Activated T-helper 2 cell treated with anti-CD3 and anti-CD28 coated beads, Interferon-gamma antibody, Interleukin-2, Interleukin-4, amounts not matched to agents 10 μg/mL and 5 μg/mL and 100 μg/mL, durations not matched to agents 14 hours and 24 hours and 36 hours (primary cell): ENCODE measurements at regions of chr6 and their contacts with region 1.

Region 1: DNA sequence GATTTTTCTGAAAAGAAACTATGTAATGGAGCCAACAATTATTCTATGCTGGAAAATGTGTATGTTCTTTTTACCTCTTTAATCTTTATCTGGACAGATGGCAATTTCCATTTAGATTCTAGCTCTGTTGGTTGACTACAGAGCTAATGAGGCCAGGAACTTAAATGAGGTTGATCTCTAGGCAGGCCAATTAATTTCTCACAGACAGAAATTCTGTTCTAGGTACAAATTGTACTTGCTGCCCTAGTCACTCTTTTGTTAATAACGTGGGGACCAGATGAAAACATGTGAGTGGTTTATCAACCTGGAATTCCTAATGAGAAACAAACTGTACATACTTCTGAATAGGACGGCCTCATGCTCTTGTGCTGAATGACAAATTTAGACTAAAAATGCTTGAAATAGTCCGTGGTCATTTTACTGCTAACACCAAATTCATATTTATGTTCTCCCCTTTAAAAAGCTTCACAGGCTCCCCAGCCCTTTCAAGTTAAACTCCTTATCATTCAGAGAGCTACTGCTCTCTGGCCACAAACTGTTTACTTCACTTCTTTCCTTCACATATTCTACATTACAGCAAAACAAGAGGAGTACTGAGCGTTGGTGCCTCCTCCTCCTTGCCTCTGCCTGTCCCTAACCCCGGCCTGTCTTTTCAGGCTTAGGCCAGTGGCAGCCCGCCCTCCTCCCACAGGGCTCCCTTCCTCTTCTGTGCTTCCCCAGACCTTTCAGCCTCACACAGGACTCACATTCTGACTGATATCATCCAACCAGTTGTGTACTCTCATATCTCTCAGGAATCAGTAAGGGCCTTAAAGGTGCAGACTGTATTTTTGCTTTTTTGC is 41.4 kb downstream of the DTNBP1 start:
- DNase-seq: no peak
- H3K4me3 Mint-ChIP-seq: peak overlapping the region; percentile 14
- H3K27ac Mint-ChIP-seq: peak overlapping the region; percentile 69
- H3K4me1 Mint-ChIP-seq: peaks cover 47% of the 10 kb centered on the region
- H3K27me3 Mint-ChIP-seq: no peaks in the 10 kb centered on the region

Region 2: GRCh38 chr6:13916230-13916944 is 1705.0 kb before region 1 on chr6:
- intact Hi-C with region 1: loop called (anchors 10 kb)
- DNase-seq: no peak
- H3K4me3 Mint-ChIP-seq: no peak overlapping the region
- H3K27ac Mint-ChIP-seq: no peak overlapping the region
- H3K4me1 Mint-ChIP-seq: peaks cover 6% of the 10 kb centered on the region
- H3K27me3 Mint-ChIP-seq: peaks cover 67% of the 10 kb centered on the region

Region 3: DNA sequence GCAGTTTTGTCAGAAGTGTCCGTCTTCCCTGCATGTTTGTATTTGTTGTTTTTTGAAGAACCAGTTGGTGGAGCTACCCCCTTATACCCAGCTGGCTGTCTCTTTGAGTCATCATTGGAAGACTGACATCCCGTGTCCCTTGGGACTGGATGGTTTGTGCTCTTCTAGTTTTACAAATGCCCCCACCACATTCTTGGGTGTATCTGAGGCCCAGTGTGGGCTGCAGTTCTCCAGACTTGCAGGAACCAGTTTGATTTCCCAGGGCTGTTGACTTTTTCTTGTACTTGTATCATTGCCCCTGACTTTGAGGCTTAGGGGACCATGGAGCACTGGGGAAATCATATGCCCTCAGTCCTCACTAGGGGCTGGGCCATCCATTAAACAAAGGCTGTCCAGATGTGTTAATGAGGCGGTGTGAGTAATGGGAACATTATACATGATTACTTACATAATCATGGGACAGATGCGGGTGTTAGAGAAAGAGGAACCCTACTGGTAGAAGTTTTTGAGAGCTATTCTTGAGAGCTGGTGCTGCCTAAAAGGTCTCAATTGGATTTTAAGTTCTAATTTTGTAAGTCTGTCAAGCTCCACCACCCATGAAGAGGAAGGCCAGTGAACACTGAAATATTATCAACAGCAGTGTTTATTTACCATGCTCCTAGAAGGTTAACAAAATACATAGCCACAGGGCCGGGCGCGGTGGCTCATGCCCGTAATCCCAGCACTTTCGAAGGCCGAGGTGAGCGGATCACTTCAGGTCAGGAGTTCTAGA is 367.2 kb before region 1 on chr6:
- intact Hi-C with region 1: loop called (anchors 2 kb)
- DNase-seq: no peak
- H3K4me3 Mint-ChIP-seq: peak overlapping the region; percentile 65
- H3K27ac Mint-ChIP-seq: peak overlapping the region; percentile 83
- H3K4me1 Mint-ChIP-seq: peaks cover 88% of the 10 kb centered on the region
- H3K27me3 Mint-ChIP-seq: no peaks in the 10 kb centered on the region

Region 4: GRCh38 chr6:15420959-15421438 is 200.4 kb before region 1 on chr6:
- intact Hi-C with region 1: loop called (anchors 10 kb)
- DNase-seq: no peak
- H3K4me3 Mint-ChIP-seq: peak overlapping the region; percentile 53
- H3K27ac Mint-ChIP-seq: peak overlapping the region; percentile 89
- H3K4me1 Mint-ChIP-seq: peaks cover 68% of the 10 kb centered on the region
- H3K27me3 Mint-ChIP-seq: no peaks in the 10 kb centered on the region

Region 5: GRCh38 chr6:15522427-15522826 is 99.0 kb before region 1 on chr6:
- intact Hi-C with region 1: loop called (anchors 5 kb)
- DNase-seq: no peak
- H3K4me3 Mint-ChIP-seq: no peak overlapping the region
- H3K27ac Mint-ChIP-seq: peak overlapping the region; percentile 28
- H3K4me1 Mint-ChIP-seq: peaks cover 12% of the 10 kb centered on the region
- H3K27me3 Mint-ChIP-seq: no peaks in the 10 kb centered on the region